ENCODE measurements at regions of chr13 and their contacts with region 1.

Region 1: DNA sequence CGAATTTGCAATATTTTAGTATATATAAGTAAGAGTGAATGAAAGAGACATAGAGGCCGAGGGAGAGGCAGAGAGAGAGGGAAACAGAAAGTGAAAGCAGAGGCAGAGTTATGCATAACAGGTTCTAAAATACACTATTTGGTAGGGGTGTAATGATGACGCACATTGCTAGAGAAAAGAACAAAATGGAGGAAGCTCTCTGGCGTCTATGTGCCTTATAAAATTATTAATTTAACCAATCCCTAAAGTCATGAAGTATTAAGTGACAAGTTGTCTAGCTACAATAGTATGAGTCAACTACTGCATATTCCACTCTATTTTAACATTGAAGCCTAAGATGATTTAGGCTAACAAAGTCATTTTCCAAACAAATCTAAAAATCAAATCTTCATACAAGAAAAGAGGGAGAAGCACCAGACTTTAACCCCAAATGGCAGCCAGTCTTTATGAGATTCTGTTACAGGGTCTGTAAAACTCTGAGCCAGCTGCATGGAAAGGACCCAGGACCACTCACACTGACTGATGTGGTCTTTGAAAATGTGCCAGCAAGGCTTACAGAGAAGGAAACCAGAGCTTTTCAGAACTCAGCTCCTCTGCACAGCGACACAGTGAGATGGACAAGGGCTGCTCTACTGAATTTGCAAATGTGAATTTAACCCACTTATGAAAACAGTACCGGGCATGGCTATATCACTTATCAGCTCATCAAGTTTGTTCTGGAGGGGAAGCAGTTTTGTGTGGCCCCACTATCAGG is 99.0 kb upstream of the SERP2 start:
- DNase-seq: no peak
- ATAC-seq: peak; percentile 86
- H3K4me3 Mint-ChIP-seq: peak overlapping the region; percentile 56
- H3K27ac Mint-ChIP-seq: peak overlapping the region; percentile 67
- H3K4me1 Mint-ChIP-seq: peaks cover 44% of the 10 kb centered on the region
- H3K27me3 Mint-ChIP-seq: peaks cover 2% of the 10 kb centered on the region
- CTCF ChIP-seq: no peak

Region 2: GRCh38 chr13:44104197-44104490 is 170.5 kb before region 1 on chr13:
- CTCF ChIA-PET with region 1: no interaction called
- POLR2A ChIA-PET with region 1: no interaction called
- intact Hi-C with region 1: no loop called
- DNase-seq: no peak
- ATAC-seq: no peak
- H3K4me3 Mint-ChIP-seq: no peak overlapping the region
- H3K27ac Mint-ChIP-seq: no peak overlapping the region
- H3K4me1 Mint-ChIP-seq: no peaks in the 10 kb centered on the region
- H3K27me3 Mint-ChIP-seq: peaks cover 7% of the 10 kb centered on the region
- CTCF ChIP-seq: no peak

Region 3: DNA sequence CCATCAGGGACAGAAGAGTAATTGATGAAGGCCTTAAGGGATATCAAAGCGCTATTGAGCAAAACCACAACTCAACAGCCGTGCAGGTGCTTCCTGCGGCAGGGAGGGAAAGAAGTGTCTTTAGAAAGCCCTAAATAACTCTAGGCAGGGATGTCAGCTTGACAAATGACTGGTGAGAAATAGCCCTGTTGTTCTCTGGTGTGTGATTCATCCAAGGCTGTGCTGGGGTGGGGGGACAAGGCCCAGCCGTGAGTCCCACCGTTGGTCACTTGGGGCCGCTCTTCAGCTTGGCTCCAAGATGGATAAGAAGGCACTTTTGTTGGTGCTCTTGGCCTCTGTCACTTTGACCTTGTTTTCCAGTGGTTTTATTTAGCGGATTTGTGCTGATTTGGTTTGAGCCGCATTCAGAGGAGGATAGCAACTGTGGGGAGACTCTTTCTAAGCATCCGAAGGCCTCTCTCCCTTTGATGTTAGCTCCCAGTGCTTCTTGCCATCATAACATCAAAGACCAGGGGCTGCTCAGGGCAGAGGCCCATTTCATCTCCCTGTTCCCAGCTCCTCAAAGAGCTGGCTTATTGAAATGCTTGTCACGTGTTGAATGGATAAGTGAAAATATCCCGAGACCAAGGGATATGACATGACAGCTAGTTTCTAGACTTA is 31.3 kb before region 1 on chr13:
- CTCF ChIA-PET with region 1: no interaction called
- POLR2A ChIA-PET with region 1: no interaction called
- intact Hi-C with region 1: no loop called
- DNase-seq: no peak
- ATAC-seq: peak; percentile 72
- H3K4me3 Mint-ChIP-seq: no peak overlapping the region
- H3K27ac Mint-ChIP-seq: no peak overlapping the region
- H3K4me1 Mint-ChIP-seq: peaks cover 5% of the 10 kb centered on the region
- H3K27me3 Mint-ChIP-seq: peaks cover 1% of the 10 kb centered on the region
- CTCF ChIP-seq: no peak

Region 4: GRCh38 chr13:44259045-44260027 is 15.3 kb before region 1 on chr13:
- CTCF ChIA-PET with region 1: no interaction called
- POLR2A ChIA-PET with region 1: interaction called, 11 read pairs
- intact Hi-C with region 1: loop called (anchors 1 kb)
- DNase-seq: peak; percentile 36
- ATAC-seq: peak; percentile 92
- H3K4me3 Mint-ChIP-seq: peak overlapping the region; percentile 74
- H3K27ac Mint-ChIP-seq: peak overlapping the region; percentile 80
- H3K4me1 Mint-ChIP-seq: peaks cover 19% of the 10 kb centered on the region
- H3K27me3 Mint-ChIP-seq: no peaks in the 10 kb centered on the region
- CTCF ChIP-seq: no peak

Region 5: GRCh38 chr13:44868397-44868796 is 593.8 kb after region 1 on chr13:
- CTCF ChIA-PET with region 1: no interaction called
- POLR2A ChIA-PET with region 1: no interaction called
- intact Hi-C with region 1: no loop called
- DNase-seq: no peak
- ATAC-seq: no peak
- H3K4me3 Mint-ChIP-seq: no peak overlapping the region
- H3K27ac Mint-ChIP-seq: no peak overlapping the region
- H3K4me1 Mint-ChIP-seq: no peaks in the 10 kb centered on the region
- H3K27me3 Mint-ChIP-seq: peaks cover 8% of the 10 kb centered on the region
- CTCF ChIP-seq: no peak

Region 6: GRCh38 chr13:44974056-44974793 is 699.6 kb after region 1 on chr13:
- CTCF ChIA-PET with region 1: no interaction called
- POLR2A ChIA-PET with region 1: no interaction called
- intact Hi-C with region 1: no loop called
- DNase-seq: no peak
- ATAC-seq: peak; percentile 82
- H3K4me3 Mint-ChIP-seq: no peak overlapping the region
- H3K27ac Mint-ChIP-seq: no peak overlapping the region
- H3K4me1 Mint-ChIP-seq: peaks cover 2% of the 10 kb centered on the region
- H3K27me3 Mint-ChIP-seq: no peaks in the 10 kb centered on the region
- CTCF ChIP-seq: no peak

Measured in activated B cell treated with CpG ODN at 0.5 μM for 24 hours (primary cell).